AG04449 (cell line): ENCODE measurements at regions of chr9 and their contacts with region 1.

Region 1: GRCh38 chr9:129495534-129496325 is 125.2 kb downstream of the C9orf50 start:
- DNase-seq: no peak
- H3K4me3 ChIP-seq: peak overlapping the region; percentile 78
- CTCF ChIP-seq: no peak

Region 2: GRCh38 chr9:129333953-129334724 is 161.6 kb before region 1 on chr9:
- CTCF ChIA-PET with region 1: interaction called, 4 read pairs
- POLR2A ChIA-PET with region 1: interaction called, 12 read pairs
- DNase-seq: peak; percentile 86
- H3K4me3 ChIP-seq: peak overlapping the region; percentile 15
- CTCF ChIP-seq: no peak

Region 3: DNA sequence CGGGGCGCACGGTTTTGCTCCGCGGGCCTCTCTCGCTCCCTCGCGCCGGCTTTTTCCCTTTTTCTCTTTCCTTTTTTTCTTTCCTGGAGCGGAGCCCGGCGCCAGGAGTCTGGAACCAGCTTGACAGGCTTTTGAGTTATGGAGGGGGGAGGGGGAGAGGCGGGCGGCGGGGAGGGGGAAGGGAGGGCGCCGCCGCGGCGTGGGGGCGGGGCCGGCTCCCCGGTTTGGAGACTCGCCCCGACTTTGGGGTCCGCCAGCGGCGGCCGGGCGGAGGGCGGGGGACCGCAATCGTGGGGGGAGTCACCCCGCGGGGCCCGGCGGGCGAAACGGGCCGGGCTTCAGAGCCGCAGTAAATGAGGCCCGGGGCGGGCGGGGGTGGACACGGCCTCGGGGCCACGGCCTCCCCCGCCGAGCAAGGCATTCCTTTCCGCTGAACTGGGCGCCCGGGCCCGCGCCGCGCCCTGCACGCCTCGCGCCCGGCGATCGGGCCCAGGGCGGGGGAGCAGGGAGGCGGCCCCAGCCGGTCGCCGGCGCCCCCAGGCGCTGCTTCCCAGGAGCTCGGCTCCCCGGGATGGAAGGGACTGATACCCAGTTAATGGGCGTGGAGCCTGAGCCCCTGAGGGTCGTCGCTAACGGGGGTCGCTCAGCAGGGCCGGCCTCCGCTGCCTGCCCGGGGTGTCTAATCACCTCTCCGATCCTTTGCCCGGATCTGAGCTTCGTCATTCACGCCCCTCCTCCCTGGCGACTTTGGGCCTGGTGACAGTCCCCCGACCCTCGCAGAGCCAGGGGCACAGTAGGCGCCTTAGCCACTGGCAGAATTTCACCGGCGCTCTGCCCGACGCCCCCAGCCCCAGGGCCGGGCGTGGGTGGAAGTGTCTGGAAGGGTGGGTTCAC is 13.0 kb before region 1 on chr9:
- CTCF ChIA-PET with region 1: interaction called, 4 read pairs
- POLR2A ChIA-PET with region 1: interaction called, 47 read pairs
- DNase-seq: no peak
- H3K4me3 ChIP-seq: peak overlapping the region; percentile 37
- CTCF ChIP-seq: peak; percentile 28

Region 4: DNA sequence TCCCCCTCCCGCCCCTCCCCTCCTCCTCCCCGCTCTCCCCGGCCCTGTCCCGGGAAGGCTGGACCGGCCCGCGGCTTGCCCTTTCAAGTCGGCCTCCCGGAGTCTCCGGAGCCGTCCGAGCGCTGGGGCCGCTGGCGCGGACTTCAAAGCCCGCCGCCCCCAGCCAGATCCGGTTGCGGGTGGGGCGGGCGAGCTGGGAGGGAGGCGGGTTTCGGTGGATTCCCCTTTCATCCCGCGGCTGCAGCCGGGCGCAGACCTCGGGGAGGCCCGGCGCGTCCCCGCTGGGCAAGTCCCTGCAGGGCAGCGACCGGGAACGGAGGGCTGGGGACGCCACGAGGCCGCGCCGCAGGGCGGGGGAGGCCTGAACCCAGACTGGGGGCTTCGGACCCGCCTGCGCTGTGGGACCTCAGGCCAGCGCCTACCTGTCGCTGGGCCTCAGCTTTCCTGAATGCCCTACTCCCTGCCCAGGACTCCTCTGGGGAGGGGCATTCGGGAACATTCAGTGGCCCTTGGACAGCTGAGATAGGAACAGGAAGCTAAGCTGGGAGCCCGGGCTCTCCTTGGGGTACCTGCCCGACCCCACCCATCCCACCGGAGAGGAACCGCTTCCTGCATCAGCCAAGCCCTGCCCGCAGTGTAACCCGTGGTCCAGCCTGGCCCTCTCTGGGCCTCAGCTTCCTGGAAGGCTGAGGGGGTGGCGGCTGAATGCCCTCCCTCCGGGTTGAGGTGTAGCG is 101.8 kb after region 1 on chr9:
- CTCF ChIA-PET with region 1: interaction called, 3 read pairs
- POLR2A ChIA-PET with region 1: interaction called, 15 read pairs
- DNase-seq: no peak
- H3K4me3 ChIP-seq: peak overlapping the region; percentile 45
- CTCF ChIP-seq: no peak